Natural killer cell (primary cell): ENCODE measurements at regions of chr1 and their contacts with region 1.

Region 1: DNA sequence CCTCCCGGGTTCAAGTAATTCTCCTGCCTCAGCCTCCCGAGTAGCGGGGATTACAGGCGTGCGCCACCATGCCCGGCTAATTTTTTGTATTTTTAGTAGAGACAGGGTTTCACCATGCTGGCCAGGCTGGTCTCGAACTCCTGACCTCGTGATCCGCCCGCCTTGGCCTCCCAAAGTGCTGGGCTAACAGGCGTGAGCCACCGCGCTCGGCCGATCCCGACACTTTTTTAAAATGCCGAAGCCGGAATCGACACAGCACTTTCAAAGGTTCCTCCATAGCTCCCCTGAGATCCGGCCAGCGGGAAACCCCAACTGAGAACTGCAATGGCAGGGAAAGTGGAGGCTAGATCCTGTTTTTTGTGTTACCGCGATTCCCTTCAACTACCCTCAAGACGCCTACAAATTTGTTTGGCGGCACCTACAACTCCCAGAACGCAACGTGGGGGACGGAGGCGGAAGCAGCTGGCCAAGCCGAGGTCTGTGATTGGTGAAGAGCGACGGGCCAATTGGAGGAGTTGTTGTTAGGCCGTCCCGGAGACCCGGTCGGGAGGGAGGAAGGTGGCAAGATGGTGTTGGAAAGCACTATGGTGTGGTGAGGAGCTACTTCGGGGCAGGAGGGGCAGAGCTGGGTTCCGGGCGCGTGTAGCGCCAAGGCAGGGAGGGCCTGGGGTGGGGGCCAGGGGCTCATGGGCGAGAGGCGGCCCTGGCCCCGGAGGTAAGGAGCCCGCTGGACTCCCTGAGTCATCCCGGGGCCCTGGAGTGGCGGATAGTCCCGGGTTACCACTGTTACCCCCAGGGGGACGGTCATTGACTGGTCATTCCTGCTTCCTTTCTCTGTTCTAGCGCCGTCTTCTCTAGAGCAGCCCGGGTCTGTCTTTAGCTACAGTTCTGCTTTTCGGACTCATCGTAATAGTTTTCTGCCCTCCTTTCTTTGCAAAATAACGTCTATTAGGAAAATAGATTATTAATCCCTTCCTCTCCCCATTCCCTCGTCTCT is at the start of gene PSMD4:
- DNase-seq: peak; percentile 89 to 98
- ATAC-seq: peak; percentile 91 to 99 (median 95)
- H3K4me3 ChIP-seq: peak within 1 kb of the TSS; percentile 81
- H3K4me3 Mint-ChIP-seq: peak within 1 kb of the TSS; percentile 96
- H3K27ac ChIP-seq: peak within 1 kb of the TSS; percentile 79
- H3K27ac Mint-ChIP-seq: peak within 1 kb of the TSS; percentile 94 to 97
- H3K4me1 ChIP-seq: peaks cover 15% of the 10 kb centered on the region
- H3K4me1 Mint-ChIP-seq: peaks cover 31 to 32% of the 10 kb centered on the region in 2 donors
- H3K27me3 ChIP-seq: no peaks in the 10 kb centered on the region
- H3K27me3 Mint-ChIP-seq: no peaks in the 10 kb centered on the region
- CTCF ChIP-seq: no peak
- total RNA-seq, gene PSMD4: 94.2 to 101 (median 99.3) TPM

Region 2: DNA sequence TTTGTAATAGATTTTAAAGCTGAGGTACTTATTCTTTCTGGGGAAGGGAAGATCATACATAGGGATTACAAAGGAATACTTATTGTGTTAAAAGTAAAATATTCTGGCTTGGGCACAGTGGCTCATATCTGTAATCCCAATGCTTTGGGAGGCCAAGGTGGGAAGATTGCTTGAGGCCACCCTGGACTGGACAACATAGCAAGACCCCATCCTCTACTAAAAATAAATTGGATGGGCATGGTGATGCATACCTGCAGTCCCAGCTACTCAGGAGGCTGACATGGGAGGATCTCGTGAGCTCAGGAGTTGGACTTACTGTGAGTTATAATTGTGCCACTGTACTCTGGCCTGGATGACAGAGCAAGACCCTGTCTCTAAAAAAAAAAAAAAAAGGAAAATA is 156.4 kb before region 1 on chr1:
- intact Hi-C with region 1: loop called (anchors 1 kb)
- DNase-seq: no peak
- ATAC-seq: no peak
- H3K4me3 ChIP-seq: no peak overlapping the region
- H3K4me3 Mint-ChIP-seq: no peak overlapping the region
- H3K27ac ChIP-seq: no peak overlapping the region
- H3K27ac Mint-ChIP-seq: no peak overlapping the region
- H3K4me1 ChIP-seq: no peaks in the 10 kb centered on the region
- H3K4me1 Mint-ChIP-seq: no peaks in the 10 kb centered on the region
- H3K27me3 ChIP-seq: no peaks in the 10 kb centered on the region
- H3K27me3 Mint-ChIP-seq: no peaks in the 10 kb centered on the region
- CTCF ChIP-seq: no peak

Region 3: DNA sequence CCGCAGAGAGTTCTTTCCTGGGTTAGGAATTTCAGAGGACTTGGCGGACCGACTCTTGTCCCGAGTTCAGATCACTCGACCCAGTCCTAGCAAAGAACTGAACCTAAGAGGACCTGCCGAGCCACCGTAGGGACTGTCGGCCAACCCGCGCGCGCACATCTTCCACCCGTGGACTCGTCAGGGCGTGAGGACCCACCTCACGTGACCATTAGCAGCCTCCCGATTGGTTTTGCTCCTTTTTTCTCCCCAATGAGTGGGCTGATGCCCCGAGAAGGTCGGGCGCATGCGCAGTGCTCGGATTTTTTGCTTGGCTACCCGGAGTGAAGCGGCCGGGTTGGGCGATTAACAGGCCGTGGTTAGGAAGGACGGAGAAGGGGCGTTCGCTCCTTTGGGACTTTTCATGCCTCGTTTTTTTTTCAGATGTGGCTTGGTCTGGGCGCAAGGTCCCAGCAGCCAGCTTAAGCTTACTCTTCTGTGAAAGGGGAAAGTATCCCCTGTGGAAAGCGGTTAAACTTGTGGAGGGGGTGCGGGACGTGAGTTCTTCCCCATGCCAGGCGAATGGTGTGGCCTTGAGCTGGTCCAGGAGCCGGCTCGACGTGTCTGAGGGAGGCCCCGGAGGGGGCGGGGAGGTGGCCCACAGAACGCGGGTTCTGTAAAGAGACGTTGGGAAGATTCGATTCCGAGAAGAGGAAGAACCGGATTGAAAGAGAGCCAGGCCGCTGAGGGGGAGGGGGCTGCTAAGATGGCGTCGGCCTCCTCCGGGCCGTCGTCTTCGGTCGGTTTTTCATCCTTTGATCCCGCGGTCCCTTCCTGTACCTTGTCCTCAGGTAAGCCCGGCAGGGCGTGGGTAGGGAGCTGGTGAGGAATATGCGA is 56.0 kb before region 1 on chr1 and contains the start of gene PIP5K1A:
- intact Hi-C with region 1: loop called (anchors 1 kb)
- DNase-seq: peak; percentile 98 to 99
- ATAC-seq: peak; percentile 95 to 99 (median 97)
- H3K4me3 ChIP-seq: peak within 1 kb of the TSS; percentile 69
- H3K4me3 Mint-ChIP-seq: peak within 1 kb of the TSS; percentile 100
- H3K27ac ChIP-seq: peak within 1 kb of the TSS; percentile 72
- H3K27ac Mint-ChIP-seq: peak within 1 kb of the TSS; percentile 98 to 99
- H3K4me1 ChIP-seq: peaks cover 26% of the 10 kb centered on the region
- H3K4me1 Mint-ChIP-seq: peaks cover 28 to 29% of the 10 kb centered on the region in 2 donors
- H3K27me3 ChIP-seq: no peaks in the 10 kb centered on the region
- H3K27me3 Mint-ChIP-seq: peaks cover 7% of the 10 kb centered on the region in 2 donors
- CTCF ChIP-seq: no peak
- total RNA-seq, gene PIP5K1A: 42.0 to 65.2 (median 44.6) TPM